Activated T-helper 1 cell treated with anti-CD3 and anti-CD28 coated beads, Interleukin-12 subunit alpha, Interleukin-12 subunit beta, Interleukin-2, Interleukin-4 antibody, amounts not matched to agents 30 ng/mL and 10 ng/mL and 1 ng/mL, durations not matched to agents 14 hours and 24 hours and 36 hours (primary cell): ENCODE measurements at regions of chr7 and their contacts with region 1.

Region 1: GRCh38 chr7:2508327-2509215 is 11.0 kb upstream of the LFNG start:
- DNase-seq: peak; percentile 63
- H3K4me3 Mint-ChIP-seq: peak overlapping the region; percentile 71
- H3K27ac Mint-ChIP-seq: peak overlapping the region; percentile 74
- H3K4me1 Mint-ChIP-seq: peaks cover 42% of the 10 kb centered on the region
- H3K27me3 Mint-ChIP-seq: peaks cover 5% of the 10 kb centered on the region

Region 2: DNA sequence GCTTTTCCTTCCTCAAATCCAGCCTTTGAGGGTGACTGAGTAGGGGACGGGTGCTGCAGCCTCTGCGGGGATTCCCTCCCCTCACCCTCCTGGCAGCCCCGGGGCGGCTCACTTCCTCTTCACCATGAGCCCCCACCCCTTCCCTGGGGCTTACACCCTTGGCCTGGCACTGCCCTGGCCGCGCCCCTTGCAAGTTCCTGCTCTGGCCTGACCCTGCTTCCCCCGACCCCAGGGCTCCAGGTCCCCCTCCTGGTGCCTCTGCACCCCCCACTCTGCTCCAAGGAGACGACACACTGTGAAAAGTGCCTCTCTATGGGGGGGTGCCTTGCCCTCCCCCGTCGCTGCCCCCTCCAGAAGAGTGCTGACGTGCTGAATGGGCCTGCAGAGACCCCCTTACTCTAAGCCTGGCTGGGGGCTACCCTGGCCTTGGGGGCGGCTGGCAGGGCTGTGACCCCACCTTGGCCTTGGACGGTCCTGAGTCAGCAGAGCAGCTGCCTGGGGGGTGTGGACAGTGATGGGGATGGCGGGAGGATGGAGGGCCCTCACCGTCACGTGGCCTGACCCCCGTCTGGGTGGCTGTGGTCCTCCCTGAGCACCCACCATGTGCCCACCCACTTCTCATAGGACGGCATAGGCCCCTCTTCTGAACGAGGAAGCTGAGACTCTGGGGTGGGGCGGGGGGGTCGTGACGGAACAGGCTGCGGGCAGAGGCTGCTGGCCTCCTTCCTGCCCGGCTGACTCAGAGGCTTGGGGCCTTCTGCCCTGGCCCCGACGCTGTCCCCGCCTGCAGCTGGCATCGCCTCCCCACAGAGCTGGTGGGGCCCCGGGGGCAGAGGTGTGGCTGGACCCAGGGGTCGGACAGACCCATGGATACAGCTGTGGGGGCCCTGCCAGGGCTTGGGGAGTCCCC is 20.8 kb after region 1 on chr7:
- intact Hi-C with region 1: loop called (anchors 2 kb)
- DNase-seq: peak; percentile 60
- H3K4me3 Mint-ChIP-seq: peak overlapping the region; percentile 74
- H3K27ac Mint-ChIP-seq: peak overlapping the region; percentile 97
- H3K4me1 Mint-ChIP-seq: peaks cover 34% of the 10 kb centered on the region
- H3K27me3 Mint-ChIP-seq: no peaks in the 10 kb centered on the region